ENCODE measurements at regions of chr4 and their contacts with region 1.

Region 1: DNA sequence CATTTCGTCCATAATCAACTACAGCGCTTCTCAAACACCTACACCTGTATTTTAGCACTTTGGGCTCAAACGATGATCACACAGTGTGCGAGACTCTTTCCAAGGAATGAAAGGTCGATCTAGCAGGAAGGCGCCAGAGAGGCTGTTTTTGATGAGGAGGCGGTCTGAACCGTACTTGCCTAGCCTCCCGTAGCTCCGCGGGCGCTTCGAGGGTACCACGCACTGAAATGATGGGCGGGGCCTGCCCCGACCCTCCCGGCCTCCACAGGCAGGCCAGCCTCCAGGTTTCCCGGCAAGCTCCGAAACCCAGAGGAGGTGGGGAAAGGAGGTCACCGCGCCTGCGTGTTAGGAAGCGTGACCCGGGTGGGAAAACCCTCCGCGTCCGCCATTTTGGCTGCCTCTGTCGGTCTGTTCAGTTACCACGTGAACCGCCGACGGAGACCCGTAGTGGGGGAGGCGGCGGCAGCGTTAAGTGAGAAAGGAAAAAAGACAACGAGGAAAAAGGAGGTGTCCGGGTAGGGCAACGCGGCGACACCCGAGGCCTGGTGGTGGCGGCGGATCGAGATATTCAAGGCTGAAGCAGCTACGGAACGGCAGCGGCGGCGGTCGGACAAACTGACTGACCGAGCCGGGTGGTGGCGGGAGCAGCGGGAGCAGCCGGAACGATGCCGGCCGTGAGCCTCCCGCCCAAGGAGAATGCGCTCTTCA is at the start of gene NAA15:
- DNase-seq: peak; percentile 94 to 99 (median 96)
- ATAC-seq: peak; percentile 87
- H3K4me3 ChIP-seq: peak within 1 kb of the TSS; percentile 99
- H3K27ac ChIP-seq: peak within 1 kb of the TSS; percentile 98
- H3K4me1 ChIP-seq: peaks cover 11 to 12% of the 10 kb centered on the region in 2 experiments
- H3K27me3 ChIP-seq: no peaks in the 10 kb centered on the region
- CTCF ChIP-seq: no peak
- EP300 ChIP-seq: no peak
- POLR2A ChIP-seq: peak; percentile 94
- RAD21 ChIP-seq: no peak
- polyA plus RNA-seq, gene NAA15: 37.8 to 41.3 TPM

Region 2: GRCh38 chr4:139050446-139050845 is 250.8 kb before region 1 on chr4:
- CTCF ChIA-PET with region 1: no interaction called
- POLR2A ChIA-PET with region 1: no interaction called
- in situ Hi-C with region 1: no loop called
- intact Hi-C with region 1: no loop called
- DNase-seq: no peak
- ATAC-seq: no peak
- H3K4me3 ChIP-seq: no peak overlapping the region
- H3K27ac ChIP-seq: no peak overlapping the region
- H3K4me1 ChIP-seq: no peaks in the 10 kb centered on the region
- H3K27me3 ChIP-seq: no peaks in the 10 kb centered on the region
- CTCF ChIP-seq: no peak
- EP300 ChIP-seq: no peak
- POLR2A ChIP-seq: no peak
- RAD21 ChIP-seq: no peak

Region 3: GRCh38 chr4:139312552-139313332 is 11.5 kb after region 1 on chr4:
- CTCF ChIA-PET with region 1: no interaction called
- POLR2A ChIA-PET with region 1: interaction called, 23 read pairs
- in situ Hi-C with region 1: no loop called
- intact Hi-C with region 1: no loop called
- DNase-seq: no peak
- ATAC-seq: no peak
- H3K4me3 ChIP-seq: no peak overlapping the region
- H3K27ac ChIP-seq: no peak overlapping the region
- H3K4me1 ChIP-seq: peaks cover 11 to 17% of the 10 kb centered on the region in 2 experiments; a peak in 4 of 5 replicates
- H3K27me3 ChIP-seq: no peaks in the 10 kb centered on the region
- CTCF ChIP-seq: no peak
- EP300 ChIP-seq: no peak
- POLR2A ChIP-seq: no peak
- RAD21 ChIP-seq: no peak

Region 4: GRCh38 chr4:139619644-139620043 is 318.4 kb after region 1 on chr4:
- CTCF ChIA-PET with region 1: no interaction called
- POLR2A ChIA-PET with region 1: no interaction called
- in situ Hi-C with region 1: no loop called
- intact Hi-C with region 1: no loop called
- DNase-seq: peak in 2 of 4 experiments; percentile 18 to 37
- ATAC-seq: peak; percentile 92
- H3K4me3 ChIP-seq: no peak overlapping the region
- H3K27ac ChIP-seq: no peak overlapping the region
- H3K4me1 ChIP-seq: no peaks in the 10 kb centered on the region
- H3K27me3 ChIP-seq: peaks cover 4 to 5% of the 10 kb centered on the region in 2 experiments; a peak in 3 of 5 replicates
- CTCF ChIP-seq: peak; percentile 55 to 59 (median 59); a peak in 5 of 6 replicates
- EP300 ChIP-seq: no peak
- POLR2A ChIP-seq: no peak
- RAD21 ChIP-seq: peak; percentile 17 to 51